Activated CD4-positive, alpha-beta memory T cell treated with anti-CD3 and anti-CD28 coated beads for 36 hours (primary cell): ENCODE measurements at regions of chr1 and their contacts with region 1.

Region 1: DNA sequence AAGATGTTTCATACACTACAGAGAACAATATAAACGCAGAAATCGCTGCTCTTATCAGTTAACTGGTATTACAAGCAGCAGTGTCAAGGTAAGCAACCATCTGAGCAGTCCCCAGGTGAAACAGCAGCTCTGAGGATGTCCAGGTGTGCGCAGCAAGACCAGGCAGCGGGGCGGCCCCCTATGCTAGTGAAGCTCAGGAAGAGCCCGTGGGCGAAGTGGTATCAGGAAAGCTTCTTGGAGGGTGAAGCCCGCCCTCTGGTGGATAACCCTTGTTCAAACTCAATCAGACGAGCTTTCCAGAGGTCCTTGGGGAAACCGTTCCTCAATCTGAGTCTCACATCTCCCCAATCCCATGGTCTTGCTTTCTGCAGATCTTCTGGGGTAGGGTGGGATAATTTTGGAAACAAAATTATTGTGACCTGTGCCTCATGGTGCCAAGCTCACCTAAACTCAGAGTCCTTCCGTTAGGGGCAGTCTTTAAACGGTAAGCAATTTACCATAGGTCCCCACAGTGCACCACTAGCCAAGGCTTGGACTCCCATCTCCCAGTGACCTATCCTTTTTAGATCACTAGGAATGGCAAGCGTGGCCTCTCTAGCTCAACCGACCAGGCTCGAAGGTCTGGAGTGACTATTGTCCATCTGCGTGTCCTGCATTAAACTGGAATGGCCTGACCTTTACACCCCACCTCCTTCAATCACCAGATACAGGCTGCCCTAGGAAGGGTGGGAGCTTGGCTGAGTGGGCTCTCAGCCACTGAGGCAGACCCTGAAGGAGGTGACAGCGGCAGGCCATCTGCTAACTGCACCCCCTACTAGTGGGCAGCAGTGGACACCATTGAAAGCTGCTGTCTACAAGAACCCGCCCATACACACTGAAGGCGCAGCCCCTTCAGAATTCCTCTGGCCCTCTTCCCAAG is 13.6 kb upstream of the FAM110D start:
- DNase-seq: peak; percentile 83
- H3K4me3 Mint-ChIP-seq: no peak overlapping the region
- H3K27ac Mint-ChIP-seq: no peak overlapping the region
- H3K4me1 Mint-ChIP-seq: peaks cover 4% of the 10 kb centered on the region
- H3K27me3 Mint-ChIP-seq: no peaks in the 10 kb centered on the region

Region 2: DNA sequence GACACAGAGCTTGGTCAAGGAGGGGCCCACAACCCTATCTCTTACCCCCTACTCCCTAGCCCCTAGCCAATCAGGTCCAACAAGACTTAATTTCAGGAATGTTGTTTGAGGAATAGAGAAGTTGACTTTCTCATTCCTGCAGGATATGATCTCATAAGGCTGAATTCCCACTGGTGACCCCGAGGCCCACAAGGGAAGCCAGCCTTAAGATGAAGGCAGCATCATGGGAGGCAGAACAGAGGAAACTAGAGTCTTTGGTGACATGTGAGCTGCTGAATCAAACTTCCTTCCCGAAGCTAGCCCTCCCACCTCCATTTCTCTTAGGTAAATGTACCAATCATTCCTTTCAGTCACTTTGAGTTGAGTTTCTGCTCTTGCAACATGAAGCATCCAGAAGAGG is 42.8 kb before region 1 on chr1:
- CTCF ChIA-PET with region 1: interaction called, 204 read pairs
- POLR2A ChIA-PET with region 1: interaction called, 7 read pairs
- intact Hi-C with region 1: loop called (anchors 1 kb)
- DNase-seq: no peak
- H3K4me3 Mint-ChIP-seq: no peak overlapping the region
- H3K27ac Mint-ChIP-seq: no peak overlapping the region
- H3K4me1 Mint-ChIP-seq: peaks cover 7% of the 10 kb centered on the region
- H3K27me3 Mint-ChIP-seq: no peaks in the 10 kb centered on the region

Region 3: DNA sequence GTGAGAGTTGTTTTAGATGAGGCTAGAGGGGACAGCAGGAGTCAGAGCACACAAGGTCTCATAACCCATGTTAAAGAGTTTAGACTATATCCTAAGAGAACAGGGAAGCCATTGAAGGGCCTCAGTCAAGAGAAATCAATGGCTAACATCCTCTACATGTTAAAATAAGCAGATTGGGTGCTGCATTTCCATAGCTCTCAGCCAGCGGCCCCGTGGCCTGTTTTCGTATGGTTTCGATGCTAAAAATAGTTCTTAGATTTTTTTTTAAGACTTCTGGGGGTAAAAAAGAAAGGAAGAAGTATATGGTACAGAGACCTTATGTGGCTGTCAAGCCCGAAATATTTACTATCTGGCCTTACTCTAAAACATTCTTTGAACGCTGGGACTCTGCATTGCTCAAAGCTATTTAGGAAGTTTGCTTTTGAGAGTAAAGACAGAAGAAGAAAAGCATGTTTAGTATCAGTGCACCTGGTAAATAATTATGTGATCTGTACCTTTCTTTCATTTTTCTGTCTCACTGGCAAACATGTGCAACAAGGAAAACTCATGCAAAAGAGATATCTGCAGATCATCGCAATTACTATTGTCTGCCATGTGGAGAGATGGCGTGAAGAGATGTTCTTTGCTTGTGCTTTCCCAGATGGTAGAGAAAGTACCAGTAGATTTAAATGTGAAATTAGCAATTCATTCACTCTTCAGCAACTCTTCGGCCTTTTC is 25.2 kb before region 1 on chr1:
- CTCF ChIA-PET with region 1: interaction called, 50 read pairs
- POLR2A ChIA-PET with region 1: no interaction called
- intact Hi-C with region 1: no loop called
- DNase-seq: no peak
- H3K4me3 Mint-ChIP-seq: no peak overlapping the region
- H3K27ac Mint-ChIP-seq: peak overlapping the region; percentile 38
- H3K4me1 Mint-ChIP-seq: peaks cover 30% of the 10 kb centered on the region
- H3K27me3 Mint-ChIP-seq: no peaks in the 10 kb centered on the region

Region 4: GRCh38 chr1:26132128-26132833 is 13.0 kb before region 1 on chr1:
- CTCF ChIA-PET with region 1: interaction called, 52 read pairs
- POLR2A ChIA-PET with region 1: no interaction called
- intact Hi-C with region 1: loop called (anchors 2 kb)
- DNase-seq: no peak
- H3K4me3 Mint-ChIP-seq: no peak overlapping the region
- H3K27ac Mint-ChIP-seq: no peak overlapping the region
- H3K4me1 Mint-ChIP-seq: peaks cover 13% of the 10 kb centered on the region
- H3K27me3 Mint-ChIP-seq: no peaks in the 10 kb centered on the region

Region 5: GRCh38 chr1:26169669-26170471 is 24.6 kb after region 1 on chr1 and contains the start of gene ZNF593:
- CTCF ChIA-PET with region 1: interaction called, 15 read pairs
- POLR2A ChIA-PET with region 1: no interaction called
- intact Hi-C with region 1: no loop called
- DNase-seq: peak; percentile 94
- H3K4me3 Mint-ChIP-seq: peak within 1 kb of the TSS; percentile 83
- H3K27ac Mint-ChIP-seq: peak within 1 kb of the TSS; percentile 72
- H3K4me1 Mint-ChIP-seq: peaks cover 17% of the 10 kb centered on the region
- H3K27me3 Mint-ChIP-seq: no peaks in the 10 kb centered on the region
- total RNA-seq, gene ZNF593: 37.4 to 38.0 TPM